CD14-positive monocyte (primary cell): ENCODE measurements at regions of chr1 and their contacts with region 1.

Region 1: DNA sequence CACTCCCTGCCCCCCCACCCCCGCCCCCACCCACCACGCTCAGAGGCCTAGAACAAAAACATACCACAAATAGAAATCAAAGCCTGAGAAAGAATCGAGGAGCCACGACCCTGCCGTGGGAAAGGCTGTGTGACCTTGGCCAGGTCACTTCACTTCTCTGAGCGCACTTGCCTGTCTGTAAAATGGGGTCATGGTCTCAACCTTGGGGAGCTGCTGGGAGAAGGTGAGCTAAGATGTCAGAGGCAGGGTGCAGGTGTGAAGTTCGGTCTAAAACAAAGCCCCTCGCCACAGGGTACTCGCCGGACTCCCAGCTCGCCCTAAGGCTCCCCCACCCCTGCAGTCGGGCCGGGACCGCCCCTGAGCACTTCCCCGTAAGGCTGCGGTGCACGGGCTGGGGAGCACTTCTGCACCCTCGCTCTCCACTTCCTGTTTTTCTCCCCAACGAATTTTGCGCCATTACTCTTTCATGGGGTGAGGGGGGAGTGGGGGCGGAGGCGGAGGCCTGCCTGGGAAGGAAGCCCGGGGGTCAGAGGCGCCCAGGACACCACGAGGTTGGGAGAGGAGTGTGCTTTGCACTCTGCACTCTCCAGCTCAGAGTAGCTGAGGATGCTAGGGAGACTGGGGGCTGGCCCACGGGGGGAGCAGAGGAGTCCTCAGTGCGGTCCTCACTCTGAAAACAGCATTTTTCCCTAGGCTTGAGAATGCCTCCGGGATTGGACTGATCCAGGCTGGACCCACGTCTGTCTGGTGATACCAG is 21.9 kb upstream of the PIK3CD start:
- DNase-seq: peak; percentile 85 to 90 (median 86)
- H3K4me3 ChIP-seq: peak overlapping the region; percentile 20 to 73 (median 37)
- H3K4me3 Mint-ChIP-seq: peak overlapping the region; percentile 60 to 88
- H3K27ac ChIP-seq: peak overlapping the region; percentile 71 to 80
- H3K27ac Mint-ChIP-seq: peak overlapping the region; percentile 73 to 92 (median 90)
- H3K4me1 ChIP-seq: peaks cover 73 to 74% of the 10 kb centered on the region in 2 donors
- H3K4me1 Mint-ChIP-seq: peaks cover 68% of the 10 kb centered on the region
- H3K27me3 ChIP-seq: peaks cover 0 to 2% of the 10 kb centered on the region in 2 donors
- H3K27me3 Mint-ChIP-seq: peaks cover 8 to 12% (median 11%) of the 10 kb centered on the region in 3 donors
- CTCF ChIP-seq: no peak

Region 2: DNA sequence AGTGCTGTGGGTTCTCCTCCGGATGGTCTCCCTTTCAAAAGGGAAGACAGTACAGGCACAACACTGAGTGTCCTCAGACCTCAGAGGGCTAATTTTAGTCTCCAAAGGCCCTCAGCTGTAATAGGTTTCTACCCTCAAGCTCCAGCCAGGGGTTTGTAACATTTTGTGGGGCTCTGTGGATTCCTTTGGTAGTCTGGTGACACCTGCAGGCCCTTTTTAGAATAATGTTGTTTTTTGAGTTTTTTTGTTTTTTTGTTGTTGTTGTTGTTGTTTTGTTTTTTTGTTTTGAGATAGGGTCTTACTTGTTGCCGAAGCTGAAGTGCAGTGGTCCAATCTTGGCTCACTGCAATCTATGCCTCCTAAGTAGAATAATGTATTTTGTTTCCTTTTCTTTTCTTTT is 55.9 kb before region 1 on chr1:
- intact Hi-C with region 1: no loop called
- DNase-seq: no peak
- H3K4me3 ChIP-seq: no peak overlapping the region
- H3K4me3 Mint-ChIP-seq: no peak overlapping the region
- H3K27ac ChIP-seq: no peak overlapping the region
- H3K27ac Mint-ChIP-seq: peak overlapping the region in 1 of 7 donors; percentile 48
- H3K4me1 ChIP-seq: no peaks in the 10 kb centered on the region
- H3K4me1 Mint-ChIP-seq: peaks cover 5% of the 10 kb centered on the region
- H3K27me3 ChIP-seq: no peaks in the 10 kb centered on the region
- H3K27me3 Mint-ChIP-seq: peaks cover 0 to 2% (median 0%) of the 10 kb centered on the region in 3 donors
- CTCF ChIP-seq: peak; percentile 50

Region 3: GRCh38 chr1:9643351-9644256 is 14.0 kb after region 1 on chr1:
- intact Hi-C with region 1: loop called in 1 of 2 experiments (anchors 2 kb)
- DNase-seq: peak in 1 of 3 donors; percentile 46
- H3K4me3 ChIP-seq: peak overlapping the region in 2 of 3 experiments; percentile 12 to 60
- H3K4me3 Mint-ChIP-seq: peak overlapping the region; percentile 64 to 85
- H3K27ac ChIP-seq: peak overlapping the region; percentile 69 to 88
- H3K27ac Mint-ChIP-seq: peak overlapping the region; percentile 82 to 94 (median 90)
- H3K4me1 ChIP-seq: peaks cover 77 to 78% of the 10 kb centered on the region in 2 donors
- H3K4me1 Mint-ChIP-seq: peaks cover 71% of the 10 kb centered on the region
- H3K27me3 ChIP-seq: no peaks in the 10 kb centered on the region
- H3K27me3 Mint-ChIP-seq: no peaks in the 10 kb centered on the region
- CTCF ChIP-seq: no peak

Region 4: DNA sequence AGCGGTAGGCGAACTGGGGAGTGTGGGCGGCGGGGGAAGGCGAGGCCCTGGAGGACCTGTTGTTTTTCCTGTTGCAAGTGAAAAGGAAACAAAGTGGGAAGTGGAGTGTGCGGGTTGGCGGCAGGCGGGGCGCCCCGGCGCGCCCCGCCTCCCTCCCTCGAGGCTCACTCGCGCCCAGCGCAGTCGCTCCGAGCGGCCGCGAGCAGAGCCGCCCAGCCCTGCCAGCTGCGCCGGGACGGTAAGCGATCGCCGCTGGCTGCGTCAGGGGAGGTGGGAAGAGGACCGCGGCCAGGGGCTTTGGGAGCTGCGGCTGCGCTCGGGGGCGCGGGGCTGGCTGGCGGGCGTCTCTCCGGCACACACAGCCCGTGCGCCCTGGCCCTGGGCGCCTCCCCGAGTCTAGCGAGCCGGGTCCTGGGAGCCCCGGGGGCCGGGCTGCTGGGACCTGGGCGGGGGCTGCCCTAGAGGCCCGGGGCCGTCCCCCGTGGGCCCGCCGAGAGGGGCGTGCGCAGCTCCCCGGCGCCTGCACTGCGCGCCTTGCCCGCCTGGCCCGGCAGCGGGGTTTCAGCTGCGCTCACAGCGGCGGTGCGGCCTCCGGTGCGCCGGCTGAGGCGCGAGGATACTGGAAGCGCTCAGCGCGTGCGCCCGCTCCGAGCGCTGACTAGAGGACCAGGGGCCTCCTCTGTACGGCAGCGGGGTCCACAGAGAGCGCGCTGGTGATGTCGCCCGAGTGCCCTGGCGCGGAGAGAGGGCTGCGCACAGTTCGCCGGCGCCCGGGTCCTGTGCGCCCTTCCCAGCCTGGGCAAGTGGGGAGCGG is 22.1 kb after region 1 on chr1 and contains the start of gene PIK3CD:
- intact Hi-C with region 1: loop called in 1 of 2 experiments (anchors 2 kb)
- DNase-seq: peak in 2 of 3 donors; percentile 46 to 54
- H3K4me3 ChIP-seq: peak within 1 kb of the TSS; percentile 67 to 96 (median 92)
- H3K4me3 Mint-ChIP-seq: peak within 1 kb of the TSS; percentile 97 to 99
- H3K27ac ChIP-seq: peak within 1 kb of the TSS; percentile 81
- H3K27ac Mint-ChIP-seq: peak within 1 kb of the TSS; percentile 90 to 98 (median 96)
- H3K4me1 ChIP-seq: peaks cover 55 to 63% of the 10 kb centered on the region in 2 donors
- H3K4me1 Mint-ChIP-seq: peaks cover 61% of the 10 kb centered on the region
- H3K27me3 ChIP-seq: no peaks in the 10 kb centered on the region
- H3K27me3 Mint-ChIP-seq: peaks cover 0 to 2% (median 0%) of the 10 kb centered on the region in 3 donors
- CTCF ChIP-seq: no peak
- polyA plus RNA-seq, gene PIK3CD: 33.2 to 120 (median 52.2) TPM

Region 5: GRCh38 chr1:9665193-9665592 is 35.6 kb after region 1 on chr1:
- intact Hi-C with region 1: loop called (anchors 5 kb)
- DNase-seq: no peak
- H3K4me3 ChIP-seq: no peak overlapping the region
- H3K4me3 Mint-ChIP-seq: no peak overlapping the region
- H3K27ac ChIP-seq: no peak overlapping the region
- H3K27ac Mint-ChIP-seq: peak overlapping the region in 4 of 7 donors; percentile 7 to 75 (median 44)
- H3K4me1 ChIP-seq: peaks cover 17 to 20% of the 10 kb centered on the region in 2 donors
- H3K4me1 Mint-ChIP-seq: peaks cover 41% of the 10 kb centered on the region
- H3K27me3 ChIP-seq: no peaks in the 10 kb centered on the region
- H3K27me3 Mint-ChIP-seq: no peaks in the 10 kb centered on the region
- CTCF ChIP-seq: no peak

Region 6: GRCh38 chr1:9689011-9689706 is 59.5 kb after region 1 on chr1:
- intact Hi-C with region 1: loop called in 1 of 2 experiments (anchors 5 kb)
- DNase-seq: peak; percentile 43 to 64 (median 61)
- H3K4me3 ChIP-seq: peak overlapping the region; percentile 33 to 75 (median 35)
- H3K4me3 Mint-ChIP-seq: peak overlapping the region; percentile 72 to 84
- H3K27ac ChIP-seq: peak overlapping the region in 1 of 2 donors; percentile 48
- H3K27ac Mint-ChIP-seq: peak overlapping the region in 3 of 7 donors; percentile 6 to 41 (median 32)
- H3K4me1 ChIP-seq: peaks cover 66 to 76% of the 10 kb centered on the region in 2 donors
- H3K4me1 Mint-ChIP-seq: peaks cover 72% of the 10 kb centered on the region
- H3K27me3 ChIP-seq: no peaks in the 10 kb centered on the region
- H3K27me3 Mint-ChIP-seq: peaks cover 0 to 3% (median 0%) of the 10 kb centered on the region in 3 donors
- CTCF ChIP-seq: no peak

Region 7: GRCh38 chr1:9705337-9706093 is 75.9 kb after region 1 on chr1:
- intact Hi-C with region 1: loop called in 1 of 2 experiments (anchors 5 kb)
- DNase-seq: no peak
- H3K4me3 ChIP-seq: no peak overlapping the region
- H3K4me3 Mint-ChIP-seq: peak overlapping the region in 1 of 2 donors; percentile 35
- H3K27ac ChIP-seq: no peak overlapping the region
- H3K27ac Mint-ChIP-seq: peak overlapping the region in 3 of 7 donors; percentile 15 to 80 (median 50)
- H3K4me1 ChIP-seq: peaks cover 45 to 58% of the 10 kb centered on the region in 2 donors
- H3K4me1 Mint-ChIP-seq: peaks cover 59% of the 10 kb centered on the region
- H3K27me3 ChIP-seq: no peaks in the 10 kb centered on the region
- H3K27me3 Mint-ChIP-seq: peaks cover 0 to 5% (median 3%) of the 10 kb centered on the region in 3 donors
- CTCF ChIP-seq: no peak

Region 8: GRCh38 chr1:9867408-9868243 is 238.0 kb after region 1 on chr1:
- intact Hi-C with region 1: loop called (anchors 5 kb)
- DNase-seq: peak; percentile 61 to 74 (median 70)
- H3K4me3 ChIP-seq: no peak overlapping the region
- H3K4me3 Mint-ChIP-seq: no peak overlapping the region
- H3K27ac ChIP-seq: no peak overlapping the region
- H3K27ac Mint-ChIP-seq: peak overlapping the region in 2 of 7 donors; percentile 20 to 63
- H3K4me1 ChIP-seq: no peaks in the 10 kb centered on the region
- H3K4me1 Mint-ChIP-seq: no peaks in the 10 kb centered on the region
- H3K27me3 ChIP-seq: no peaks in the 10 kb centered on the region
- H3K27me3 Mint-ChIP-seq: peaks cover 0 to 3% (median 0%) of the 10 kb centered on the region in 3 donors
- CTCF ChIP-seq: peak; percentile 98